ENCODE measurements at regions of chr14 and their contacts with region 1.

Region 1: DNA sequence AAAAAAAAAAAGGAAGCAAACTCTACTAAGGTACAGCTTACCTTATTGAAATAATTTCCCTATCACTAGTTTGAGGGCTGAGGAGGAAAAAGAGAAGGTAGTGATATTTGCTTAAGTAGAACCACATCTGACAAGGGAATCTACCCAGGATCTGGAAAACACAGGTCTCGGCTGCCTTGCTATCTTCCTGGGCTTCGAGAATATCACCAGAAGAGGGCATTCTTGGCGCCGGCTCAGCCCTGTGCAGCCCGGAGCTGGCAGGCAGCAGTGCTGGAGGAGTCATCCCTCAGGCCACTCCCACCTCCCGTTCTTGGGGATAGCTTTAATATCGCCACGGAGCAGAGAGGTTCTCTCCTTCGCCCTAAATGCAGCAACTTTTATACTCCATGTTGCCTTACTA is 1181.2 kb downstream of the VRK1 start:
- DNase-seq: peak; percentile 59 to 89 (median 76)
- ATAC-seq: peak; percentile 72
- H3K4me3 ChIP-seq: peak overlapping the region; percentile 76
- H3K4me3 Mint-ChIP-seq: peak overlapping the region; percentile 89
- H3K27ac ChIP-seq: peak overlapping the region; percentile 74 to 82
- H3K27ac Mint-ChIP-seq: peak overlapping the region; percentile 94
- H3K4me1 ChIP-seq: peaks cover 48% of the 10 kb centered on the region
- H3K4me1 Mint-ChIP-seq: peaks cover 84% of the 10 kb centered on the region
- H3K27me3 ChIP-seq: no peaks in the 10 kb centered on the region
- H3K27me3 Mint-ChIP-seq: no peaks in the 10 kb centered on the region
- CTCF ChIP-seq: peak; percentile 69

Region 2: DNA sequence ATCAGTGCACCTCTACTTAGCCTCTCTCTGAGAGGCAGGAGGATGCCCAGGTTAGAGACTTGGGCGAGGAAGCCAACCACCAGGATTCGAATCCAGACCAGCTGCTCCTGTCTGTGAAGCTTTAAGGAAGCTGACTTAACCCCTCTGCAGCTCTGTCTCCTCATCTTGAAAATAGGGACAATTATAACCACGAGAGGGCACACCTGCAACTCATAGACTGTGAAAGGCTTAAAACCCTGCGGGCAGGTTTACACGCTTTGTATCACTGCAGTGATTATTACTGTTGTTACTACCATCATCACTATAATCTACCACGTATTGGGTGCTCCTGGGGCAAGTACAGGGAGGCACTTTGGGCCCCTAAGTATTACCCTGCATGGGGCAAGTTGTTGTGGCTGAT is 801.3 kb before region 1 on chr14:
- CTCF ChIA-PET with region 1: no interaction called
- POLR2A ChIA-PET with region 1: no interaction called
- intact Hi-C with region 1: no loop called
- DNase-seq: peak in 13 of 14 experiments; percentile 4 to 71 (median 23)
- ATAC-seq: peak; percentile 71
- H3K4me3 ChIP-seq: no peak overlapping the region
- H3K4me3 Mint-ChIP-seq: no peak overlapping the region
- H3K27ac ChIP-seq: no peak overlapping the region
- H3K27ac Mint-ChIP-seq: peak overlapping the region; percentile 16
- H3K4me1 ChIP-seq: peaks cover 21% of the 10 kb centered on the region
- H3K4me1 Mint-ChIP-seq: peaks cover 35% of the 10 kb centered on the region
- H3K27me3 ChIP-seq: no peaks in the 10 kb centered on the region
- H3K27me3 Mint-ChIP-seq: no peaks in the 10 kb centered on the region
- CTCF ChIP-seq: peak; percentile 41

Region 3: GRCh38 chr14:97713023-97713422 is 265.3 kb before region 1 on chr14:
- CTCF ChIA-PET with region 1: interaction called, 5 read pairs
- POLR2A ChIA-PET with region 1: no interaction called
- intact Hi-C with region 1: loop called (anchors 10 kb)
- DNase-seq: peak in 1 of 14 experiments; percentile 39
- ATAC-seq: no peak
- H3K4me3 ChIP-seq: no peak overlapping the region
- H3K4me3 Mint-ChIP-seq: no peak overlapping the region
- H3K27ac ChIP-seq: peak overlapping the region in 1 of 2 donors; percentile 5
- H3K27ac Mint-ChIP-seq: no peak overlapping the region
- H3K4me1 ChIP-seq: peaks cover 18% of the 10 kb centered on the region
- H3K4me1 Mint-ChIP-seq: peaks cover 53% of the 10 kb centered on the region
- H3K27me3 ChIP-seq: no peaks in the 10 kb centered on the region
- H3K27me3 Mint-ChIP-seq: no peaks in the 10 kb centered on the region
- CTCF ChIP-seq: no peak

Region 4: DNA sequence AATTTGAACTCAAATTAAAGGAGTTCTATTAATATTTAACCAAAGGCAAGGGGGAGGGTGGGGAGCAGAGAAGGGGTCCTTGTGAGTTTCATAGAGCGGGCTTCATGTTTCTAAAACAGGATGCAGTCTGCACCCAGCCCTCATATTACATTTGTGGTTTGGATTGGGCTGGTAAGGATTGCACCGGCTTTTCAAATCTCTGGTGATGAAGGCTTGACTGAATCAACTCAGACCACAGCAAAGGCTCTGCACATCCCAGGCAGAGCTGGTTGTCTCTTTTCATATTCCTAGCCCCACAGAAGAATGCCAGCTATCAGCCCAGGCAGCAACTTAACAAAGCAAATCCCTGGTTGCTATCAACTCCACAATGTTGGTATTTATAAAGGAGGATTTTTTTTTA is 40.3 kb after region 1 on chr14:
- CTCF ChIA-PET with region 1: interaction called, 10 read pairs
- POLR2A ChIA-PET with region 1: interaction called, 18 read pairs
- intact Hi-C with region 1: loop called in 1 of 2 experiments (anchors 5 kb)
- DNase-seq: peak in 11 of 14 experiments; percentile 17 to 71 (median 37)
- ATAC-seq: peak; percentile 91
- H3K4me3 ChIP-seq: no peak overlapping the region
- H3K4me3 Mint-ChIP-seq: peak overlapping the region; percentile 32
- H3K27ac ChIP-seq: no peak overlapping the region
- H3K27ac Mint-ChIP-seq: peak overlapping the region; percentile 42
- H3K4me1 ChIP-seq: peaks cover 53% of the 10 kb centered on the region
- H3K4me1 Mint-ChIP-seq: peaks cover 75% of the 10 kb centered on the region
- H3K27me3 ChIP-seq: no peaks in the 10 kb centered on the region
- H3K27me3 Mint-ChIP-seq: no peaks in the 10 kb centered on the region
- CTCF ChIP-seq: no peak

Region 5: GRCh38 chr14:98167705-98168104 is 189.4 kb after region 1 on chr14:
- CTCF ChIA-PET with region 1: no interaction called
- POLR2A ChIA-PET with region 1: interaction called, 22 read pairs
- intact Hi-C with region 1: no loop called
- DNase-seq: peak in 6 of 14 experiments; percentile 33 to 66 (median 56)
- ATAC-seq: peak; percentile 43
- H3K4me3 ChIP-seq: peak overlapping the region; percentile 22
- H3K4me3 Mint-ChIP-seq: peak overlapping the region; percentile 64
- H3K27ac ChIP-seq: peak overlapping the region; percentile 64 to 68
- H3K27ac Mint-ChIP-seq: peak overlapping the region; percentile 93
- H3K4me1 ChIP-seq: peaks cover 80% of the 10 kb centered on the region
- H3K4me1 Mint-ChIP-seq: peaks cover 99% of the 10 kb centered on the region
- H3K27me3 ChIP-seq: no peaks in the 10 kb centered on the region
- H3K27me3 Mint-ChIP-seq: no peaks in the 10 kb centered on the region
- CTCF ChIP-seq: no peak

Region 6: DNA sequence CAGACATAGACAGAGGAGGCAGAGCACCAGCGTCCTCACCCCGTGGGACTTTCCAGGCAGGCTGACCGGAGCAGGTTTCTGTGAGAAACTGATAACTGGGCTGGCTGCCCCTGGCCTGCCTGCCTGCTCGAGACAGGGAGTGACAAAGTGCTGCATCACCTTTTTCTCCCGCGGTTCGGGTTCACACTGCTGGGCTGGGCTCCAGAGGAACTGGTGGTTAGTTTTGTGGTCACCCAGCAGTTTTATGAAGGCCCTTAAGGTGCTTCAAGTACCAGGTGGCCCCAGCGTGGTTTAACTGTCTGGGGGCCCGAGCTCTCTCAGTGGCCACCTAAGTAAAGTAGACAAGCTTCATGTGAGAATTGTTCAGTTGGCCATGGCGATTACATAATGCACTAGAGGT is 220.0 kb after region 1 on chr14:
- CTCF ChIA-PET with region 1: no interaction called
- POLR2A ChIA-PET with region 1: interaction called, 7 read pairs
- intact Hi-C with region 1: loop called in 1 of 2 experiments (anchors 5 kb)
- DNase-seq: peak in 7 of 14 experiments; percentile 35 to 79 (median 61)
- ATAC-seq: peak; percentile 32
- H3K4me3 ChIP-seq: peak overlapping the region; percentile 22
- H3K4me3 Mint-ChIP-seq: peak overlapping the region; percentile 36
- H3K27ac ChIP-seq: peak overlapping the region; percentile 13 to 54
- H3K27ac Mint-ChIP-seq: peak overlapping the region; percentile 93
- H3K4me1 ChIP-seq: peaks cover 72% of the 10 kb centered on the region
- H3K4me1 Mint-ChIP-seq: peaks cover 96% of the 10 kb centered on the region
- H3K27me3 ChIP-seq: no peaks in the 10 kb centered on the region
- H3K27me3 Mint-ChIP-seq: no peaks in the 10 kb centered on the region
- CTCF ChIP-seq: no peak

Region 7: DNA sequence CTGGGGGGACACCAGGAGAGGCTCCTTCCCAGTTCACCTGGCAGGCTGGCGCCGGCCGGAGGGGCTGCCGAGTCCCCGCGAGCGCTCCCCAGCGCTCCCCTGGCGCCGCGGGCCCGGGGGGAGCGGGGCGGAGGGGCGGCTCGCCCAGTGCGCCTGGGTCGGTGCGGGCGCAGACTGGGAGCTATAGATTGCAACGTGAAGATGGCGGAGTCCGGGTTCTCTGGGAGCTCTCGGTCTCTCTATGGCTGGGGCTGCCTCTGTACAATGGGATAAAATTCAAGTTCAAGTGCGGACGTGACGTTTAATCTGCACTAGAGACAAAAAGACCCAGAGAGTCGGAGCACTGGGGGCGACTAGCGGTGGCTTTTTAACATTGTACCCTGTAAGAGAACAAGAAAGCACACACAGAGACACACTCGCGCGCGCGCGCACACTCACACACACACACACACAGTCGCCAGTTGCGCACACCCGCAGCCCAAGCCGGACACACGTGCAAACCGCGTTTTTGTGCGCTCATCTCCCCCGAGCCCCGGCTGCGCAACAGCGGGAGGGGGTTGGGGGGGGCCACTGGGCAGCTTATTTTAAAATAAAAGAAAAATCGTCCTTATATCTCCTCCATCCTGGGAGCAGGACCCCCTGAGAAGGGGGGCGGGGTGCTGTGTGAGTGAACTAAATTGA is 1293.8 kb after region 1 on chr14 and contains the start of gene BCL11B:
- CTCF ChIA-PET with region 1: interaction called, 26 read pairs
- POLR2A ChIA-PET with region 1: interaction called, 70 read pairs
- intact Hi-C with region 1: loop called (anchors 2 kb)
- DNase-seq: peak; percentile 78 to 96 (median 88)
- ATAC-seq: peak; percentile 76
- H3K4me3 ChIP-seq: peak within 1 kb of the TSS; percentile 97
- H3K4me3 Mint-ChIP-seq: peak within 1 kb of the TSS; percentile 100
- H3K27ac ChIP-seq: peak within 1 kb of the TSS; percentile 18 to 79
- H3K27ac Mint-ChIP-seq: peak within 1 kb of the TSS; percentile 99
- H3K4me1 ChIP-seq: peaks cover 36% of the 10 kb centered on the region
- H3K4me1 Mint-ChIP-seq: peaks cover 48% of the 10 kb centered on the region
- H3K27me3 ChIP-seq: no peaks in the 10 kb centered on the region
- H3K27me3 Mint-ChIP-seq: peaks cover 5% of the 10 kb centered on the region
- CTCF ChIP-seq: peak; percentile 71
- total RNA-seq, gene BCL11B: 244 to 254 TPM